Head of caudate nucleus (tissue), 42 donors: ENCODE measurements at regions of chr1 and their contacts with region 1.

Region 1: DNA sequence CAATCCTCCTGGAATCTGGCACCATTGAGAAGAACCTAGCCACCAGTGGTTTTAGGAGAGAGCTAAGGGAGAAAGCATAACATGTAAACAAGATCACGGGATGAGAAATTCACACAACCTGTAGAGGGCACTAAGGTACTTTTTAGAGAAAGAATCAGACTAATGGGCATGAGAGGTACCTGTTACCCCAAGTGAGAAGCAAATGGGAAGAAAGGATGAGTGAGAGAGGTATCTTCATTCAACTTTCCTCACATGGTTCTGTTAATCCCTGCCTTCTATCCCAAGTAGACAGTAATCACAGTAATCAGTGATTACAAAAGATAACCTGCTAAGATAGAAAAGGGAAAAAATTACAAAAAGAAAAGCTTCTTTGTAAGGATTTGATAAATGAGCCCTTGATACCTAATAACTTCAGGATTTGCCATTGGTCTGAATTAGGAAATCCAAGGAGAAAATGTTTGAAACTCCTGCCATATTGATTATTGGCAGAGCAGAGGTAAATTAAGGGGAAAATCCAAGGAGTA is 251.1 kb upstream of the ADGRL2 start:
- DNase-seq: peak in 1 of 42 donors; percentile 9

Region 2: GRCh38 chr1:81305997-81306452 is 243.6 kb before region 1 on chr1:
- intact Hi-C with region 1: loop called (anchors 5 kb)
- DNase-seq: peak in 30 of 42 donors; percentile 1 to 70 (median 22)

Region 3: GRCh38 chr1:82161700-82162141 is 612.1 kb after region 1 on chr1:
- intact Hi-C with region 1: no loop called
- DNase-seq: peak in 2 of 42 donors; percentile 0 to 5